Vagina (tissue), 2 donors: ENCODE measurements at regions of chr15 and their contacts with region 1.

Region 1: DNA sequence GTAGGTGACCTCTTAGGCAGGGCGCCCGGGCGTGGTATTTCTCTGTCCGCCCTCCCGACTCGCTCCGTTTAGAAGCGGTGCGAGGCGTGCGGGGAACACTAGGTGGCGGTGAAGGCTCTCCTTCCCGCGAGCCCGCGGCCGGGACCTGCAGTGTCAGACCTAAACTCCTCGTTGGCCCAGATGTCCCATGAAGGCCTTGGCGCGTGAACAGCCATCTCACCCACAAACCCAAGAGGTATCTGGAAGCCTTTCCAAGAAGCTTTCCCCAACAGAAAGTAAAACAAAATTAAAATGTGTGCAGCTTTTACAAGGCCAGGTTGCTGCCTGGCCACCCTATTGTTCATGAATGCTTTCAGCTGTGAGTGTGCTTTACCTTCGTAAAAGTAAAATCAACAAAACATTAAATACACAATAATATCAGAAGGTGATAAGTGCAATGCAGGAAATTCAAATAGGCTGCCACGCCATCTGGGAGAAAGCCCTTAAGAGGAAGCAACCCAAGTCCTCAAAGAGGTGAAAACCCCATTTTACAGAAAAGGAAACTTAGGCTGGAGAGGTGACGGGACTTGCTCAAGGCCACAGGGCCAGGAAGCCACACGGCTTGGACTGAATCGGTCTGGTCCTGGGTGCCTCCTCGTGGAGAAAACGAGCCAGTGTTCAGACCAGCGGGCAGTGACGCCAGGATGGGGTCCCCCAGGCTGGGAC is 120.3 kb downstream of the ETFA start:
- DNase-seq: no peak
- H3K4me3 ChIP-seq: no peak overlapping the region
- H3K27ac ChIP-seq: no peak overlapping the region
- H3K4me1 ChIP-seq: peaks cover 24% of the 10 kb centered on the region
- H3K27me3 ChIP-seq: no peaks in the 10 kb centered on the region
- CTCF ChIP-seq: peak; percentile 16 to 75 (median 66)
- POLR2A ChIP-seq: no peak

Region 2: DNA sequence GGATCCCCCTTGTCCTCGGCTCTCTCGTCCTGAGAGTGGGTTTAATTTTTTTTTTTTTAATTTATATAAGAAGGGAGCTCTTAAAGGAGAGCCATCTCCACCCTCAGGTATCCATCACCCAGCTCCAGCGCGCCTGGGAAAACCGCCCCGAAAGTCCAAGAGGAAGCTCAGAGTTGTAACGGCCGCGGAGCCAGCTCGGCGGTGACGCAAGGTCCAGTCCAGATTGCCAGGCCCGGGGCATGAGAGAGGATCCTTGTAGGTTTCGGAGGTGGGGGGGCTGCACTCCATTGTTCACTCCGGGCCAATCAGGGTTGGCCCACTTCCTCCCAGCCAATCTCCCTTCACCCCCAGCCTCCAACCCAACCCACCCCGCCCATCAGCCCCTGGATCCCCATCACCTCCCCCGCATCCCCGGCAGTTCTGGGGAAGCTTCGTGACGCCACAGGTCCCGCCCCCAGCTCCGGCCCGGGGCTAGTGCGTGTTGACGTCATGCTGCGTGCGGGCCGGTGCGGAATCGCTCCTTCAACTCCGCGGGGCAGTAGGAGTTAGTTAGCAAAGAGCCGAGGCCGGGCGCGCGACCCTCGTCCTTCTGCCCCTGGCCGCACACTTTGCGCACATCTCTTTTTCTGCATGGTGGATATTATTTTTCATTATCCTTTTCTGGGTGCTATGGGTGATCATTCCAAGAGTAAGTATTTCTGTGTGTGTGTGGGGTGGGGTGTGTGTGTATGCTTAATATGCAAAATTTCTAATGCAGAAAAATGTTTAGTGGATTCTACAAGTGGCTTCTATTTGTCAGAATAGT is 145.5 kb after region 1 on chr15 and contains the start of gene ISL2:
- intact Hi-C with region 1: loop called (anchors 10 kb)
- DNase-seq: peak in 1 of 2 donors; percentile 92
- H3K4me3 ChIP-seq: peak within 1 kb of the TSS; percentile 32 to 42
- H3K27ac ChIP-seq: peak within 1 kb of the TSS; percentile 63
- H3K4me1 ChIP-seq: peaks cover 48% of the 10 kb centered on the region
- H3K27me3 ChIP-seq: peaks cover 9% of the 10 kb centered on the region
- CTCF ChIP-seq: no peak
- POLR2A ChIP-seq: peak in 1 of 2 donors; percentile 47
- total RNA-seq, gene ISL2: 2.0 TPM

Region 3: DNA sequence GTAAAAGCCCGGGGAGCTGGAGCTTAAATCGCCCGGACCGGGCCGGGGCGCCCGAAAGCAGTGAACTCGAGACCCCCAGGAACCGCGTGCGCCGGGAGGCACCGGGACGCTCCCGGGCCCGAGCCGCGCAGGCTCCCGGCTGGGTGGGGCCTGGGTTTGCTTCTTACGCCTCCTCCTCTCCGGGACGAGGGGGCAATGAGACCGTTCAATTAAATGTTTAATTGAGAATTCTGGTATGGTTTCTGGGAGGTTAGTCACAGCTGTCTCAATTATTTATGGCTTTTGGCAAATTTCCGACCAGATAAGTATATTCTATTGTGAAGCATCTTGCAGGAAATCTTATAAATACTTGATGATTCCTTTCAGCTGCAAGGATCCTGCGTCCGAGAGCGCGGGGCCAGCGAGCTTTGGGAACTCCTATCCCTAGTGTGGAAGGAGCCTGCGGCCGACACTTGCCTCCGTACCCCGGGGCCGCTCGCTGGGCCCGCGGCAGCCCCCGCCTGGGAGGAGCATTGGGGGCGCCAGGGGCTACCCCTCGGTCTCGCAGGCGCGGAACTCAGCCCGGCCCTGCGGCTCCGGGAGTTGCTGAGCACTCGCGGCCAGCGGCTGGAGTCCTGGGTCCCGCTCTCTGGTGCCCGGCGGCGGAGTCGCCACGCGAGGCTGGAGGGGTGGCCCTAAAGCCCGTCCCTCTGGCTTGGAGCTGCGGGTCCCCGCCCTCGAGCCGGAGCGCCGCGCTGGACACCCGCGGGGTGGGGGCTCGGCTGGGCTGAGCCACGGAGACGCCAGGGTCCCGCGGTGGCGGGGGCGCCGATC is 155.9 kb after region 1 on chr15:
- intact Hi-C with region 1: no loop called
- DNase-seq: peak in 1 of 2 donors; percentile 72
- H3K4me3 ChIP-seq: peak overlapping the region; percentile 43 to 47
- H3K27ac ChIP-seq: peak overlapping the region; percentile 71
- H3K4me1 ChIP-seq: peaks cover 29% of the 10 kb centered on the region
- H3K27me3 ChIP-seq: no peaks in the 10 kb centered on the region
- CTCF ChIP-seq: no peak
- POLR2A ChIP-seq: no peak